Activated B cell treated with CpG ODN at 0.5 μM for 24 hours (primary cell): ENCODE measurements at regions of chr12 and their contacts with region 1.

Region 1: GRCh38 chr12:42023733-42024494 is 120.8 kb downstream of the GXYLT1 start:
- DNase-seq: peak; percentile 58
- ATAC-seq: peak; percentile 82
- H3K4me3 Mint-ChIP-seq: peak overlapping the region; percentile 76
- H3K27ac Mint-ChIP-seq: no peak overlapping the region
- H3K4me1 Mint-ChIP-seq: peaks cover 6% of the 10 kb centered on the region
- H3K27me3 Mint-ChIP-seq: peaks cover 10% of the 10 kb centered on the region
- CTCF ChIP-seq: peak; percentile 100

Region 2: DNA sequence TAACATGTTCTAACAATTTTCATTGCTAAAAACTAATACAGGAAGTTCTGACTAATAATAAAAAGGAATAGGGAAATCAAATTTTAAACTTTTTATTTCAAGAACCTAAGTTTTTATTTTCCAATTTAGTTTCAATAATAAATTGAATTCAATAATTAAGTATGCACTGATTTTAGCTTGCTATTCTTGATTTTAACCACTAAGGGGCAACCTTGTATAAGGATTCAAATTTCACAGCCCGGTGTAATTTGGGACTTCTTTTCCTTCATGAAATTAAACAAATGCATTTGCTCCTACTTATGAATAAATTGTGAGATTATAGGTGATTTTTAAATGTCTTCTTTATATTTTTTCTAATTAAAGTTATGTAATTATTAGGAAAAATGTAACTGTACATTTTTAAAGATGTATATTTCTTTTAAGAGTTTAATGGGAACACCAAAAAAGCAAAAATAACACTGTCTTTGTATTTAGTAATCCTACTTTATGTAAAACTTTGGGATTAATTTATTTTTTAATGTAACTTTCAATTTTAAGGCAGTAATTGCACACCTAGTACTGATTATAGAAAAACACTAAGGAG is 1077.2 kb before region 1 on chr12:
- CTCF ChIA-PET with region 1: interaction called, 15 read pairs
- POLR2A ChIA-PET with region 1: no interaction called
- intact Hi-C with region 1: loop called (anchors 1 kb)
- DNase-seq: no peak
- ATAC-seq: peak; percentile 25
- H3K4me3 Mint-ChIP-seq: no peak overlapping the region
- H3K27ac Mint-ChIP-seq: no peak overlapping the region
- H3K4me1 Mint-ChIP-seq: no peaks in the 10 kb centered on the region
- H3K27me3 Mint-ChIP-seq: peaks cover 7% of the 10 kb centered on the region
- CTCF ChIP-seq: no peak

Region 3: GRCh38 chr12:41264281-41264680 is 759.6 kb before region 1 on chr12:
- CTCF ChIA-PET with region 1: interaction called, 8 read pairs
- POLR2A ChIA-PET with region 1: no interaction called
- intact Hi-C with region 1: loop called (anchors 5 kb)
- DNase-seq: no peak
- ATAC-seq: no peak
- H3K4me3 Mint-ChIP-seq: no peak overlapping the region
- H3K27ac Mint-ChIP-seq: no peak overlapping the region
- H3K4me1 Mint-ChIP-seq: no peaks in the 10 kb centered on the region
- H3K27me3 Mint-ChIP-seq: no peaks in the 10 kb centered on the region
- CTCF ChIP-seq: no peak

Region 4: GRCh38 chr12:41277116-41277945 is 746.6 kb before region 1 on chr12:
- CTCF ChIA-PET with region 1: interaction called, 28 read pairs
- POLR2A ChIA-PET with region 1: no interaction called
- intact Hi-C with region 1: loop called (anchors 1 kb)
- DNase-seq: no peak
- ATAC-seq: peak; percentile 37
- H3K4me3 Mint-ChIP-seq: no peak overlapping the region
- H3K27ac Mint-ChIP-seq: no peak overlapping the region
- H3K4me1 Mint-ChIP-seq: peaks cover 3% of the 10 kb centered on the region
- H3K27me3 Mint-ChIP-seq: peaks cover 5% of the 10 kb centered on the region
- CTCF ChIP-seq: no peak

Region 5: DNA sequence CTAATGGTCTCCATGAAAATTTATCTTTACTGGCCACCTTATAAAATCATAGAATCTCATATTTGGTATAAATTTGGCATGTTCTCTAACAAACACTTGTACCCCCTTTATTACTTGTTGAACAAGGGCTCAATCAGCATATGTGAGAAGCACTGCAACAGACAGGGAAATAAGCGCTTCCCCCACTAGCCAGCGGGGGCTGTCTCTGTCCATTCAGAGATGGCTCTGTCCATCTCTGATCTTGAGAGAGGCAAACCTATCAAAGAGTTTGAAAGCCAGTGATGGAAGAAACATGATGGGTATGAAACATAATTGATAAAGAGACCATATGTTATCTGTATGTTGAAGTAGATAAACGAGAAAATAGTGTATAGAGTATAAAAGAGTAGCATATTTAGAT is 509.0 kb before region 1 on chr12:
- CTCF ChIA-PET with region 1: no interaction called
- POLR2A ChIA-PET with region 1: no interaction called
- intact Hi-C with region 1: loop called (anchors 10 kb)
- DNase-seq: no peak
- ATAC-seq: no peak
- H3K4me3 Mint-ChIP-seq: no peak overlapping the region
- H3K27ac Mint-ChIP-seq: no peak overlapping the region
- H3K4me1 Mint-ChIP-seq: peaks cover 9% of the 10 kb centered on the region
- H3K27me3 Mint-ChIP-seq: no peaks in the 10 kb centered on the region
- CTCF ChIP-seq: no peak